ENCODE measurements at regions of chr15 and their contacts with region 1.

Region 1: DNA sequence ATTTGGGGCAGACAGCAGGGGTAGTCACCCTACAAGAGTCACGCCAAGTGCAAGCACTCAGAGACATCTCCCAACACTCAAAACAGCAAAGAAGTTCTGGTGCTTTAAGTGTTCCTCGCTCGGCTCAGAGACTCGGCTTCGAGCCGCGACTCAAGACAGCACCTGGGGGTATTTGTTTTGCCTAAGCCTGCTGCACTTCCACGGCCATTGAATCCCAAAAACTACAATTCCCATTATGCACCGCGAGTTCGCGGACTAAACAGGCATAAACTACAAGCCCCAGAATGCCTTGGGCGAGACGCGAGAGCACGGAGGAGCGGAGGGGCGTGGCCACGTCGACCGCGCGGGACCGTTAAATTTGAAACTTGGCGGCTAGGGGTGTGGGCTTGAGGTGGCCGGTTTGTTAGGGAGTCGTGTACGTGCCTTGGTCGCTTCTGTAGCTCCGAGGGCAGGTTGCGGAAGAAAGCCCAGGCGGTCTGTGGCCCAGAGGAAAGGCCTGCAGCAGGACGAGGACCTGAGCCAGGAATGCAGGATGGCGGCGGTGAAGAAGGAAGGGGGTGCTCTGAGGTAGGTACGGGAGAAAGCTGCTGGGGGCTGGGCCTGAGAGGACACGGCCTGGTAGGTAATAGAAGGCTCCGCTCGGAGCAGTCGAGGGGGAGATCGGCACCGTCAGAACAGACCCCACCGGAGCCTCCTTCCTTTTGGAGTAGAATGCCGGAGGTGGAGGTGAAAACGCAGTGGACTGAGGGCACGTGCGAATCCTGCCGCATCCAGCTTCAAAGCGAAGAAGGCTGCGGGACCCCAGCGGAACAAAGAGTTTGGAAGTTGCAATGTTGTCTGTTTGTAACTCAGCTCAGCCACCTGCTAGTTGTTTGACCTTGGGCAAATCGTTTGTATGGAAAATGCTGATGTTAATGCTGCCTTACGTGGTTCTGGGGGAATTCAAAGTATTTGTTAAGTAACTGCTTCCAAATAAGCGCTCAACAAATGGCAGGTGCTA is at the start of gene BUB1B:
- DNase-seq: peak; percentile 97
- H3K4me3 ChIP-seq: peak within 1 kb of the TSS; percentile 91
- H3K27ac ChIP-seq: peak within 1 kb of the TSS; percentile 68
- H3K4me1 ChIP-seq: peaks cover 28% of the 10 kb centered on the region
- CTCF ChIP-seq: no peak
- total RNA-seq, gene BUB1B: 192 and 215 TPM in 2 replicates

Region 2: GRCh38 chr15:40072216-40072990 is 88.6 kb before region 1 on chr15:
- CTCF ChIA-PET with region 1: no interaction called
- POLR2A ChIA-PET with region 1: no interaction called
- intact Hi-C with region 1: no loop called
- DNase-seq: no peak
- H3K4me3 ChIP-seq: no peak overlapping the region
- H3K27ac ChIP-seq: no peak overlapping the region
- H3K4me1 ChIP-seq: peaks cover 24% of the 10 kb centered on the region
- CTCF ChIP-seq: no peak

Region 3: DNA sequence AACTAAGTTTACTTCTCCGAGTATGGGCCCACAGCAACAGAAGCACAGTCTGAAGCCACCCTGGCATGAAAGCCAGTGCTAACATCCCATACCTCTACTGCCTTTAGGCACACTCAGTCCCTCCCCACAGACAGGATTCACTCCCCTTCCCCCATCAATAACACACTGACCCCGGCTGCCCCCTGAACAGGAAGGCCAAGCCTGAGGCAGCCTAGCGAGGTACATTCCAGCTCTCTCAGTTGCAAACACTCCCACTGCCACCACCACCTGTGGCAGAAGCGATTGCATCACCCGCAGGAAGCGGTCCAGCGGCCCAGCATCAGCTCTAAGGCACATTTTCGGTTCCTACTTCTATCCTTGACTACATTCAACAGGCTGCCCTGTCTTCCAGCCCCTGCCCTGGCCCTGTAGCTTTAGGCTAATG is 45.3 kb before region 1 on chr15:
- CTCF ChIA-PET with region 1: interaction called, 3 read pairs
- POLR2A ChIA-PET with region 1: interaction called, 31 read pairs
- intact Hi-C with region 1: no loop called
- DNase-seq: peak; percentile 97
- H3K4me3 ChIP-seq: peak overlapping the region; percentile 49
- H3K27ac ChIP-seq: peak overlapping the region; percentile 86
- H3K4me1 ChIP-seq: peaks cover 80% of the 10 kb centered on the region
- CTCF ChIP-seq: no peak

Region 4: GRCh38 chr15:40232625-40233070 is 71.7 kb after region 1 on chr15:
- CTCF ChIA-PET with region 1: no interaction called
- POLR2A ChIA-PET with region 1: no interaction called
- intact Hi-C with region 1: no loop called
- DNase-seq: no peak
- H3K4me3 ChIP-seq: no peak overlapping the region
- H3K27ac ChIP-seq: no peak overlapping the region
- H3K4me1 ChIP-seq: peaks cover 12% of the 10 kb centered on the region
- CTCF ChIP-seq: no peak

Measured in OCI-LY7 (cell line).